ENCODE measurements at regions of chr1 and their contacts with region 1.

Region 1: GRCh38 chr1:48202030-48202752 is 20.3 kb upstream of the SLC5A9 start:
- DNase-seq: peak; percentile 72
- ATAC-seq: peak; percentile 64
- H3K4me3 ChIP-seq: no peak overlapping the region
- H3K27ac ChIP-seq: no peak overlapping the region
- H3K4me1 ChIP-seq: no peaks in the 10 kb centered on the region
- H3K27me3 ChIP-seq: no peaks in the 10 kb centered on the region; the same call in 1 of the 2 replicates
- CTCF ChIP-seq: peak; percentile 88

Region 2: DNA sequence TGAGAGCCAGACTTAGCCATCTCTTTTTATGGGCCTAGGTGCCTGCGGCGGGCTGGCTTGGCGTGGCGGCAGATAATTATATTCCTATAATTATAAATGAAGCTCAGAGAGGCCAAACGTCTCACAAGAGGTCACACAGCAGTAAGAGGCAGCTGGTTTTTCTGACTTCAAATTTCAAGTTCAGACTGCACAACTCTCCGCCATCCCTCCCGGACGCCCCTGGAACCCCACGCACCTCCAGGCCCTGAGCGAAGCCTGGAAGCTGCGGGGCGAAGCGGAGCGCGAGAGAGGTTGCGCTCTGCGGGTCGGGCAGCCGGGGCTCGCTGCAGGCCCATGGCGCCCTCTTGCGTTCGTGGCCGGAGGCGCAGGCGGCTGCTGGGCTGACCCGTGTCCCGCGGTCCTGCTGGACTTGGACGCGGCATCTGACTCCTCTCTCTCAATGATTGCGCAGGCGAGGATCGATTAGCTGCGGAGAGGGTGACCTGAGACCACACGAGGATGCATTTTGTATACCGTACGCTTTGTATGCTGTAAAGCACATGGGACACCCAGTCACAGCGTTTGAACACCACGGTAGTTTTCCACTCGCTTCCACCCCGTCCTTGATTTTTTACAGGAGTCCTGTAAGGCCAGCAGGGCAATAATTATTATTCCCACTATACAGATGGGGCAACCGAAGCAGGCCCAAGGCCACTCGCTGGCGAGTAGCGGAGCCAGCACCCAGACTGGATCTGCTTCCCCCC is 491.7 kb before region 1 on chr1:
- CTCF ChIA-PET with region 1: no interaction called
- POLR2A ChIA-PET with region 1: no interaction called
- intact Hi-C with region 1: no loop called
- DNase-seq: peak; percentile 77
- ATAC-seq: peak; percentile 89
- H3K4me3 ChIP-seq: peak overlapping the region; percentile 66
- H3K27ac ChIP-seq: no peak overlapping the region
- H3K4me1 ChIP-seq: peaks cover 17% of the 10 kb centered on the region
- H3K27me3 ChIP-seq: peaks cover 84% of the 10 kb centered on the region
- CTCF ChIP-seq: peak; percentile 92

Region 3: DNA sequence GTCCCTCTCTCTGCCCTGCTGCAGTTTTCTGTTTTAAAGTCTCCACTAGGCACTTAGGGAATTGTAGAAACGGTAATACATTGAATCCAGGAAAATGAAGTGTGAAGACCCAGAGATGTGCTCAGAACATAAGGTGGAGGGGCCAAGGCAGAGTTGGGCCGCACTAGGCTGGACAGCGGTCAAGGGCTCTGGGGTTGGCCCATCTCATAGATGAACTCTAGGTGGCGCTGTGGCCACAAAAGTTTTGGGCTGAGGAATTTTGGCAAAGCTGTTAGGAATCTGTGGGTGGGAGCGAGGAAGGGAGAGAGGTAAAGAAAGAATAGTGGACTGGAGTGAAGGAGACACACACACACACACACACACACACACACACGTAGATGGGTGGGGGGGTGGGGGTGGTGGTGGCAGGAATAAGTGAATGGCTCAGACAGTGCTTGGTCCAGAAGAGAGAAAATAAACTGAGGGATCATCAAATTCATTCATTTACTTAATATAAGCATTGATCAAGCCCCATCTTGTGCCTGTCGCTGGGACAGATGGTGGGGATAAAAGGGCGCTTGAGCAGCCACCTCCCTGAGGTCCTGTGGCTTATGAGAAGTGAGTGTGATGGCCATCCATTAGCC is 463.5 kb before region 1 on chr1:
- CTCF ChIA-PET with region 1: no interaction called
- POLR2A ChIA-PET with region 1: no interaction called
- intact Hi-C with region 1: loop called (anchors 2 kb)
- DNase-seq: peak; percentile 79
- ATAC-seq: peak; percentile 94
- H3K4me3 ChIP-seq: no peak overlapping the region
- H3K27ac ChIP-seq: no peak overlapping the region
- H3K4me1 ChIP-seq: no peaks in the 10 kb centered on the region
- H3K27me3 ChIP-seq: peaks cover 6% of the 10 kb centered on the region; the same call in 1 of the 2 replicates
- CTCF ChIP-seq: peak; percentile 76

Region 4: DNA sequence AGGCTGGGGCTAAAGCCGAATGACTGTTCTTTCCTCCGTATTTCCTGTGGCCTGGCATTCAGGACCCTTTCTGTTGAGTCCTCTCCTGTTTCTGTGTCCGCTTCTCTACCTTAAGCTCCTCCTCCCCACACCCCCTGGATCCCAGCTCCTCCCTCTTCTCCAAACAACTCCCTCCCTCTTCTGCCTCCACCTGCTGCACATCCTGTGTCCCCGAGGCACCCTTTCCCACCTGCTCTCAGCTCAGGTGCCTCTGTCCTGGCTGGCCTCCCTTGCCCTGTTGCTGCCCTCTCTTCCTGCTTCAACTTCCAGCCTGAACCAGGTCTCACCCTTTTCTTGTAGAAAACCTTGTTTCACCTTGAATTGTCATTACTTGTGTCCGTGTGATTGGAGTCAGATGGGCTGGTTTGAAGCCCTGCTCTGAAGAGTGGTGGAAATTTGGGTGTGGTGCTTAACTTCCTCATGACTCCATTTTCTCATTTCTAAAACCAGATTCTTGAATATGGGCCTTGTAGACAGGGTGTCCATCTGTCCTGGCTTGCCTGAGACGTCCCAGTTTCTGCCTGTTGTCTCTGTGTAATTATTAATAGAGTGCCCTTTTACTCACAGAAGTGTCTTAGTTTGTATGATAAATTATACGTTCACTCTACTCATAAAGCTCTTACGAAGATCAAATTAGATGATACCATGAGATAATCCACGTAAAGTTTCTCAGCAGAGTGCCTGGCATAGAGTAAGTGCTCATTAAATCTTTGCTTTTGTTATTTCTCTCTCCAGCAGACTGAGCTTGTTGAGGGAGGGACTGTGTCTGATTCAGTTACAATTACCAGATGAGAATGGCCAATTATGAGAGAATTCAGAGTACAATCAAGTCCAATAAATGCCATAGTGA is 146.1 kb before region 1 on chr1:
- CTCF ChIA-PET with region 1: no interaction called
- POLR2A ChIA-PET with region 1: no interaction called
- intact Hi-C with region 1: no loop called
- DNase-seq: no peak
- ATAC-seq: no peak
- H3K4me3 ChIP-seq: no peak overlapping the region
- H3K27ac ChIP-seq: no peak overlapping the region
- H3K4me1 ChIP-seq: no peaks in the 10 kb centered on the region
- H3K27me3 ChIP-seq: no peaks in the 10 kb centered on the region
- CTCF ChIP-seq: no peak

Region 5: DNA sequence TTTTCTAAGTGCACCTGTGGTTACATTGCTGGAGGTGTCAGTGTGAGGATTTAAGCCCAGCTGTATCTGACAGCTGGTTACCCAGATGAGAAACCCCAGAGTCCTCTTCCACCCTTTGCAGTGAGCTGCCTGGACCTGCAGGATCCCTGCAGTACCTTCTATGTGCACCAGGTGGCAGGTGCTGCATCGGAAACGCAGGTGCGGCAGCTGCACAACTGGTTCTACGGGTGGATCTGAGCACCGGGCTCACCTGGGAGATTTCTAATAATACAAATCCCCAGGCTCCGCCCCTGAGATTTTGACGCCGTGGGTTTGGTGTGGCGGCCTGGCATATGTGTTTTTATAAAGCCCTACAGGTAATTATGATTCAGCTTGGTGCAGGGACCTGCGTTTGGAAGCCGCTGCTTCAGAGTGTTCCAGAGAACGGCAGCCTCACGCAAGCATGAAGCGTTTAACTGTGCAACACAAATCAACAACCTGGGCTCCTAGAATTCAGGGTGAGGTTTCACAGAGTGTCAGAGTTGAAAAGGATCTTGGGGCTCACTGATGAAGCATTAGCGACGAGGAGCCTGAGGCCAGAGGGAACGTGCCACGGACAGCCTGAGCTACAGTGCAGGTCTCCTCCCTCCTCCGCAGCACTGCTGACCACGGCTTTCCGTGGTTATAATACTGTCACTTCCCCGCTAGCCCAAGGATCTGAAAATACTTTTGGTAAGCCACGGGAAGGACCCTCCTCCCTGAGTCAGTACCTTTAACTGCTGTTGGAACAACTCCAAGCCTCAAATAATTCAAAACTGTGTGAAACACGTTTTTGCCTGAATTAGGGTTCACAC is 108.3 kb before region 1 on chr1:
- CTCF ChIA-PET with region 1: interaction called, 7 read pairs
- POLR2A ChIA-PET with region 1: no interaction called
- intact Hi-C with region 1: loop called (anchors 1 kb)
- DNase-seq: peak; percentile 94
- ATAC-seq: peak; percentile 98
- H3K4me3 ChIP-seq: peak overlapping the region; percentile 51
- H3K27ac ChIP-seq: no peak overlapping the region
- H3K4me1 ChIP-seq: 0 out of 2 replicates have a peak, but pooled peaks cover 5% of the 10 kb centered on the region
- H3K27me3 ChIP-seq: peaks cover 48% of the 10 kb centered on the region
- CTCF ChIP-seq: peak; percentile 92

Region 6: GRCh38 chr1:48109390-48110013 is 92.7 kb before region 1 on chr1:
- CTCF ChIA-PET with region 1: interaction called, 5 read pairs
- POLR2A ChIA-PET with region 1: no interaction called
- intact Hi-C with region 1: loop called (anchors 1 kb)
- DNase-seq: peak; percentile 80
- ATAC-seq: peak; percentile 81
- H3K4me3 ChIP-seq: no peak overlapping the region
- H3K27ac ChIP-seq: no peak overlapping the region
- H3K4me1 ChIP-seq: no peaks in the 10 kb centered on the region
- H3K27me3 ChIP-seq: peaks cover 21% of the 10 kb centered on the region
- CTCF ChIP-seq: peak; percentile 87

Region 7: DNA sequence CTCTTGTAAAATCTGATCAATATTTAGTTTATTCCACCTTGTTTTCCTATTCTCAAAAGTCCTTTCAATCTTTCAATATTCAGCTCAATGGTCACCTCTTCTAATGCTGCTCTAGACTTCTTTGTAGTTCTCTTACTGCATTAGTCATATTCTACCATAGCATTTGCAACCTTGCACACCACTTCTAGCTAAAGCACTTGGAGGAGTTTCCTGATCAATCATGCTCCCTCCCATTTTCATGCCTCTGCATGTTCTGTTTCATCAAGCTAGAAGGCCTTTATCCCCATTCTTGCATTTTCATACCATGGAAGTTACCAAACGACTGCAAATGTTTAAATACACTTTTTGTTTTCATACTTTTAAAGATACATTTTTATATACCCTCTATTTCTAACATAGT is 92.5 kb after region 1 on chr1:
- CTCF ChIA-PET with region 1: interaction called, 13 read pairs
- POLR2A ChIA-PET with region 1: no interaction called
- intact Hi-C with region 1: no loop called
- DNase-seq: no peak
- ATAC-seq: no peak
- H3K4me3 ChIP-seq: no peak overlapping the region
- H3K27ac ChIP-seq: no peak overlapping the region
- H3K4me1 ChIP-seq: no peaks in the 10 kb centered on the region
- H3K27me3 ChIP-seq: no peaks in the 10 kb centered on the region
- CTCF ChIP-seq: no peak